ENCODE measurements at regions of chr1 and their contacts with region 1.

Region 1: DNA sequence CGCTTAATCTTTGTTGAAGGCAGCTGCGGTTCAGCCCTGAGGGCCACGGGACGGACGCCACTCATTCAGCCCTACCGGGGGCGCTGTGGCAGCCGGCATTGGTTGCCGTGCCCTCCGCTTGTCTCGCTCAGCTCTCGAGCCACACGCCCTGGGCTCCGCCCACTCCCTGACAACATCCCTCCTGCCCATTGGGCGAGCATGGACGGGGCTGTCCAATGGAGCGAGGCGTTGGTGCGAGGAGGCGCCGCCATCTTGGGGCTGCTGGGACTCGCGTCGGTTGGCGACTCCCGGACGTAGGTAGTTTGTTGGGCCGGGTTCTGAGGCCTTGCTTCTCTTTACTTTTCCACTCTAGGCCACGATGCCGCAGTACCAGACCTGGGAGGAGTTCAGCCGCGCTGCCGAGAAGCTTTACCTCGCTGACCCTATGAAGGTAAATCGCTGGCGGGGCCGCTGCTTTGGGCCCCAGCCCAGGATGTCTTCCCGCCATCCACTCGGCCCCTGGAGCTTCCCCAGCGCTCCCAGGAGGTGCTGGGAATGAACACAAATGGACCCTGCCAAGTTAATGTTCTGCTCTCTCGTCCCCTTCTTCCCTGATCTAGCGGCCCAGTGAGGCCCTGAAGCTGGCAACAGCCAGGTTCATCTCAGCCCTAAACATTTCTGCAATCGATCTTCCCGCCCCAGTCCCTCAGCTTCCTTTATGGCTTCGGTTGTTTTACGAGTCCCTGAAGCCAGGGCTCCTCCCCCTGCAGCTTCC is at the start of gene SRP9:
- H3K4me3 ChIP-seq: peak within 1 kb of the TSS; percentile 76
- H3K27ac ChIP-seq: peak within 1 kb of the TSS; percentile 95
- H3K4me1 ChIP-seq: peaks cover 12% of the 10 kb centered on the region
- CTCF ChIP-seq: peak; percentile 100

Region 2: GRCh38 chr1:225652729-225653462 is 124.9 kb before region 1 on chr1 and contains the start of gene ENAH:
- CTCF ChIA-PET with region 1: interaction called, 27 read pairs
- POLR2A ChIA-PET with region 1: interaction called, 41 read pairs
- H3K4me3 ChIP-seq: peak within 1 kb of the TSS; percentile 92
- H3K27ac ChIP-seq: peak within 1 kb of the TSS; percentile 100
- H3K4me1 ChIP-seq: peaks cover 59% of the 10 kb centered on the region
- CTCF ChIP-seq: peak; percentile 74

Region 3: GRCh38 chr1:225794954-225795353 is 17.2 kb after region 1 on chr1:
- CTCF ChIA-PET with region 1: interaction called, 9 read pairs
- POLR2A ChIA-PET with region 1: interaction called, 10 read pairs
- H3K4me3 ChIP-seq: no peak overlapping the region
- H3K27ac ChIP-seq: no peak overlapping the region
- H3K4me1 ChIP-seq: no peaks in the 10 kb centered on the region
- CTCF ChIP-seq: no peak

Region 4: DNA sequence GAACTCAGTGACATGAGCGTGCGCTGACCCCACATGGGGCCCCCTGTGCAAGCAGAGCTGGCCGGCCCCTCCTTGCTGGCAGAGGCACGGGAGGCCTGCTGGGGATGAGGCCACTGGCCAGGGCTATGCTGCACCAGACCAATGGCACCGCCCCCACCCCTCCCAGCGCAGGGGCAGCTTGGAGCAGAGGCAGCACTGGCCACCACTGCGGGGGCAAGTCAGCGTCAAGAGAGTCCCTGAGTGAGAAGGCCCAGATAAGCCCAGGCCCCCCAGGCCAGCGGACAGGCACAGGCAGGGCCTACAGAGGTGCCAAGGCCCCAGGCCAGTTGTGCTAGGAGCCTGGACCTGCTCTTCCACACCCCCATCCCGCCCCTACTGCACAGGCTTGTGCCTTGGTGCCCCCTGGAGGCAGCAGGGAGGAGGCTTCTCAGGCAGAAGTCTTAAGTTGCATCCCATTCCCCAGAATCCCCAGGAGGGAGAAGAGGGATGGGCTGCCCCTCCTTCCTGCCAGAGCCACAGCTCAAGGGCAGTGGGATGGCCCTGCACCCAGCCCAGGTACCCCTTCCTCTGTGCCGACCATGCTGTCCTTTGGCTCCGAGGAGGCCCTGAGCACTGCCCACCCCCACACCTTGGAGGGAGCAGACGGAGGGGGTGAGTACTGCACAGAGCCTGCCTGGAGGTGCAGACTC is 68.0 kb after region 1 on chr1:
- CTCF ChIA-PET with region 1: interaction called, 17 read pairs
- POLR2A ChIA-PET with region 1: interaction called, 8 read pairs
- H3K4me3 ChIP-seq: no peak overlapping the region
- H3K27ac ChIP-seq: no peak overlapping the region; the same call in 1 of the 2 replicates
- H3K4me1 ChIP-seq: no peaks in the 10 kb centered on the region
- CTCF ChIP-seq: peak; percentile 98

Region 5: DNA sequence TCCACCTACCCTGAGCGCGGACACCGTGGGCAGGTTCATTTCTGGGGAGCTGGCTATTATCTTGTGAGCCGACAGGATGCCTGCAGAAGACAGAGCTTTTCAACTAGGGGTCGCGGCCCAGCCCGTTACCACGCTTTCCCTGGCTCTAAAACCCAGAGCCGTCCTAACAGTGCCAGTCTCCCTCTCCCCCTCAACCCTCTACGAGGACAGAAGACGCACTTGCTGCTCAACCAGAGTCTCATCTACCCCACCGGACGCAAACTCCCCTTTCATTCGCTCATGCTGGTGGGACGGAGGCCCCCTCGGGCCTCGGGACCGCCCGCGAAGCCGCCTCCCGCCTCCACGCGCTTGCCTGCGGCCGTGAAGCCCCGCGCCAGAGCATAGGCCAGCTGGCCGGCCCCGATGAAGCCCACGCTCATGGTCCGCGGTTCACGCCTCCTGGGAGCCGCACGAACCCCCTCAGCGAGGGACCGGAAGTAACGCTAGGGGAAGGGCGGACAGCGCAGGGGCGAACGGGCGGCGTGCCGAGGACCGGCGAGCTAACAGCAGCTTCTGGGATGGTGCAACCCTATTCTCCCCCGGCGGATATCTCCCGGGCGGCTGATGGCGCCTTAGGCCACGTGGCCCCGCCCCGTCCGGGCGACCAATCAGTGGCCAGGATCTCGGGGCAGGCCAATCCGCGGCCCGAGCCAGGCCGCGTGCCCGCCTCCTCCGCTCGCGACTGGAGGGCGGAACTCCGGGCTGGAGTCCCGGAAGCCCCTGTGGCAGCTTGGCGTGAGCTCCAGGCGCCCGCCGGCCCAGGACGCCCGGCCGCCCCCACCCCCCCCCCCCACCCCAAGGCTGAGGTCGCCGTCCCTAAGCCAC is 146.2 kb after region 1 on chr1 and contains the start of gene PYCR2:
- CTCF ChIA-PET with region 1: interaction called, 3 read pairs
- POLR2A ChIA-PET with region 1: interaction called, 17 read pairs
- H3K4me3 ChIP-seq: peak within 1 kb of the TSS; percentile 80
- H3K27ac ChIP-seq: peak within 1 kb of the TSS; percentile 88
- H3K4me1 ChIP-seq: peaks cover 11% of the 10 kb centered on the region; the same call in 1 of the 2 replicates
- CTCF ChIP-seq: peak; percentile 81; the same call in 1 of the 2 replicates